CD4-positive, alpha-beta memory T cell (primary cell): ENCODE measurements at regions of chr19 and their contacts with region 1.

Region 1: GRCh38 chr19:15379083-15379995 is at the start of gene AKAP8:
- DNase-seq: peak; percentile 98 to 99 (median 98)
- H3K4me3 ChIP-seq: peak within 1 kb of the TSS; percentile 88 to 100
- H3K4me3 Mint-ChIP-seq: peak within 1 kb of the TSS; percentile 98 to 100 (median 100)
- H3K27ac ChIP-seq: peak within 1 kb of the TSS; percentile 99
- H3K27ac Mint-ChIP-seq: peak within 1 kb of the TSS; percentile 99 to 100 (median 100)
- H3K4me1 ChIP-seq: peaks cover 38% of the 10 kb centered on the region
- H3K4me1 Mint-ChIP-seq: peaks cover 25 to 48% (median 34%) of the 10 kb centered on the region in 4 donors
- H3K27me3 ChIP-seq: no peaks in the 10 kb centered on the region
- H3K27me3 Mint-ChIP-seq: no peaks in the 10 kb centered on the region
- total RNA-seq, gene AKAP8: 69.9 to 71.5 TPM

Region 2: GRCh38 chr19:15288146-15288963 is 91.0 kb before region 1 on chr19:
- CTCF ChIA-PET with region 1: interaction called, 5 read pairs
- POLR2A ChIA-PET with region 1: interaction called, 18 read pairs
- intact Hi-C with region 1: no loop called
- DNase-seq: no peak
- H3K4me3 ChIP-seq: no peak overlapping the region
- H3K4me3 Mint-ChIP-seq: peak overlapping the region in 7 of 8 donors; percentile 68 to 81 (median 72)
- H3K27ac ChIP-seq: peak overlapping the region; percentile 14
- H3K27ac Mint-ChIP-seq: peak overlapping the region; percentile 16 to 92 (median 67)
- H3K4me1 ChIP-seq: peaks cover 96% of the 10 kb centered on the region
- H3K4me1 Mint-ChIP-seq: peaks cover 83 to 100% (median 93%) of the 10 kb centered on the region in 4 donors
- H3K27me3 ChIP-seq: no peaks in the 10 kb centered on the region
- H3K27me3 Mint-ChIP-seq: no peaks in the 10 kb centered on the region

Region 3: GRCh38 chr19:15307169-15307568 is 72.2 kb before region 1 on chr19:
- CTCF ChIA-PET with region 1: no interaction called
- POLR2A ChIA-PET with region 1: no interaction called
- intact Hi-C with region 1: no loop called
- DNase-seq: no peak
- H3K4me3 ChIP-seq: no peak overlapping the region
- H3K4me3 Mint-ChIP-seq: peak overlapping the region in 5 of 8 donors; percentile 10 to 73 (median 34)
- H3K27ac ChIP-seq: no peak overlapping the region
- H3K27ac Mint-ChIP-seq: peak overlapping the region in 3 of 7 donors; percentile 2 to 47 (median 16)
- H3K4me1 ChIP-seq: peaks cover 80% of the 10 kb centered on the region
- H3K4me1 Mint-ChIP-seq: peaks cover 55 to 95% (median 71%) of the 10 kb centered on the region in 4 donors
- H3K27me3 ChIP-seq: no peaks in the 10 kb centered on the region
- H3K27me3 Mint-ChIP-seq: no peaks in the 10 kb centered on the region

Region 4: DNA sequence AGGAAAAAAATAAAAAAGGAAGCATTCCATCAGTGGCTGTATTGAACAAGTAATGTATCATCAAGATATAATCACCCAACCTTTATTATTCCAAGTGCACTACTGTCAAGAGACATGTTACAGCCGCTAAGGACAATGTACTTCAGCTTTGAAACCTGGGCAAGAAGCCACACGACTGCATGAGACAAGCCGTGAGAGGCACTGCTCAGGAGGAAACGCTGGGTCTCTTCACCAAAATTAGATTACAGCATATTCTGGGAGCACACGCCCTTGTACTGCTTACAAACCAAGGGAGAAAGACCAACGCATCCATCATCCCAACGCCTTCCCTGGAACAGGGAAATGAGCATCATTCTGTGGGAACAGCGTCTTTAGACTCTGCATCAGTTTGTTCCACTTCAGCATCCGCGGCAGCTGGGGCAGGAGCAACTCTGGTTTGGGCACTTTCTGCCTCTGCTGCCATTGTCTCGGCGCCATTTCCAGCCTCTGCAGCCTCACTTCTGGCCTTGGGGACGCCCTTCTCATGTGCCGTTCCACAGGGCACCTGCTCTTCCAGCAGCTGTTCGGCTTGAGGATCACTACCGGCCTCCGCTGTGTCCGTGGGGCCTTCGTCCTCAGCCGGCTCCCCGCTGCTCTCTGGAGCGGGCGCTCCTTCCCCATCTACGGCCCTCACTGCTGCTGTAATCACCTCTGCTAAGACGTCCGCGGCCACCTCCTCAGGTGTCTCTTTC is 24.6 kb before region 1 on chr19:
- CTCF ChIA-PET with region 1: interaction called, 5 read pairs
- POLR2A ChIA-PET with region 1: interaction called, 16 read pairs
- intact Hi-C with region 1: no loop called
- DNase-seq: no peak
- H3K4me3 ChIP-seq: no peak overlapping the region
- H3K4me3 Mint-ChIP-seq: no peak overlapping the region
- H3K27ac ChIP-seq: no peak overlapping the region
- H3K27ac Mint-ChIP-seq: peak overlapping the region in 3 of 7 donors; percentile 18 to 78 (median 35)
- H3K4me1 ChIP-seq: no peaks in the 10 kb centered on the region
- H3K4me1 Mint-ChIP-seq: no peaks in the 10 kb centered on the region
- H3K27me3 ChIP-seq: no peaks in the 10 kb centered on the region
- H3K27me3 Mint-ChIP-seq: no peaks in the 10 kb centered on the region

Region 5: DNA sequence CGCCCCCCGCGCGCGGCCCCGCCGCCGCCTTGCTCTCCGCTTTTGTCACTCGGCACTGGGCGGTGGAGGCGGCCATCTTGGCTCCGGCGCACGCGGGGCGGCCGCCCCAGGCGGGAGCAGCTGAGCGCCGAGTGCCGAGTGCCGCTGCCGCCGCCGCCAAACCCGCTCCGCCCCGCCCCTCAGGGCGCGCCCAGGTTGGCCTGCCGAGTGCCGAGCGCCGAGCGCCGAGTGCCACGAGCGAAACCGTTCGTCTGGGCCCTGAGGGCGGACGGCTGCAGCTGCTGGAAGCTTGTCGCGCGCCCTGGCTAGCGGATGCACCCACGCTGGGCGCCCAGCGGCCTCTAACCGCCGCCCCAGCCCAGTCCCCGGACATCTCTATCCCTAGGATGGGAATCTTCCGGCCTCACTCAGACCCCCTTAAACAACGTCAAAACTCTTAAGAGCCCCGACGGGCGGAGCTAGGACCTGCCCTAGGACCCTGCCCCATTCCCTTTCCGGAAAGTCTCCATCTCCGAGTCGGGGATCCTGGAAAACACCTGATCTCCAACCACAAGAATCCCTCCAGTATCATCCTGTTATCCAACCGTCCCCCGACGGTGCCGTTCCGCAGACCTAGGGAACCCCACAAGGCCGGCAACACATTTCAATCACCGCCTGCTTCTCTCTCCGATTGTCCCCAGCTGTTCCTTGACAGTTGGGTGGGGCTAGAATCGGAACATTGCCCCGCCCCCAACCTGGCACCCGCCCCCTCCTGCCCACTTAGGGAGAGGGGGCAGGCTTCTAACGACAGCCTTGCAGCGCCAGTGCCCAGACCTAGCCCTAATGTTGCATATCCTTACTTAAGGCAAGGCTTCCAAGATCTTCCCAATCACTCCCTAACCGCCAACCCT is 53.5 kb after region 1 on chr19:
- CTCF ChIA-PET with region 1: no interaction called
- POLR2A ChIA-PET with region 1: interaction called, 25 read pairs
- intact Hi-C with region 1: no loop called
- DNase-seq: peak; percentile 91 to 92 (median 91)
- H3K4me3 ChIP-seq: peak overlapping the region; percentile 78 to 91
- H3K4me3 Mint-ChIP-seq: peak overlapping the region; percentile 87 to 95 (median 92)
- H3K27ac ChIP-seq: peak overlapping the region; percentile 61
- H3K27ac Mint-ChIP-seq: peak overlapping the region; percentile 87 to 99 (median 94)
- H3K4me1 ChIP-seq: peaks cover 31% of the 10 kb centered on the region
- H3K4me1 Mint-ChIP-seq: peaks cover 21 to 44% (median 27%) of the 10 kb centered on the region in 4 donors
- H3K27me3 ChIP-seq: no peaks in the 10 kb centered on the region
- H3K27me3 Mint-ChIP-seq: no peaks in the 10 kb centered on the region

Region 6: DNA sequence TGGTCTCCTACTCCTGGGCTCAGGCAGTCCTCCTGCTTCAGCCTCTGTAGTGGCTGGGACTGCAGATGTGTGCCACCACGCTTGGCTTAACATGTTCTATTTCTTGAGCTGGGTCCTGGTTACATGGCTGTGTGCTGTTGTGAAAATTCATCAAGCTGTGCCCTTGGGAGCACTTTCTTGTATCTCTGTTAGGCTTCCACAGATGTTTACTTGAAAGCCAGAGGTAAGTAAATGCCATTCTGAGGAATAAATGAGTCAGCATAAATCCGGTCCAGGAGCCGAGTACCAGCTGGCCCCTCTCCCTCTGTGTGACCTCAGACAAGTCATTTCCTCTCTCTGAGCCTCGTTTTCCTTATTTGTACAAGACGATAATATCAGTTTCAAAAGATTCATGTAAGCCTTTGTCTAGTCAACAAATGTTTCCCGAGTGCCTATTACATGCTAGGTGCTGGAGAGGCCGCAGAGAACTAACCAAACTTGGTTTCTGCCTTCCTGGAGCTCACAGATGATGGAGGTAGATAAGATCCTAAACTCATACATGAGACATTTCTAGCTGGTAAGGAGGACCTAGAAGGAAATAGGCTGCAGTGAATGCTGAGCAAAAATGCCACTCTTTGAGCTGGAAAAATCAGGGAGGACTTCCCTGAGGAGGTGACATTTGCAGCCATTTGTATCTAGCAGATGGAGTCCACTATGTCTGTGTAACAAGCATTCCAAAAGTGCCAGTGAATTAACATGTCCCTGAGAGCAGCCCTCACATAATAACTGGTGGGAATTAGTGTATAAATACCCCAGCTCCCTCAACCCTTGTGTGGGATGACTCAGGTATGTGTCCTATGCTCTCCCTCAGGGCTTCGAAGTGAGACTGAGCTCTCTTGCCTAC is 87.8 kb after region 1 on chr19:
- CTCF ChIA-PET with region 1: interaction called, 4 read pairs
- POLR2A ChIA-PET with region 1: interaction called, 29 read pairs
- intact Hi-C with region 1: loop called (anchors 5 kb)
- DNase-seq: peak; percentile 56 to 89 (median 65)
- H3K4me3 ChIP-seq: no peak overlapping the region
- H3K4me3 Mint-ChIP-seq: peak overlapping the region; percentile 74 to 89 (median 78)
- H3K27ac ChIP-seq: peak overlapping the region; percentile 38
- H3K27ac Mint-ChIP-seq: peak overlapping the region; percentile 83 to 97 (median 91)
- H3K4me1 ChIP-seq: peaks cover 71% of the 10 kb centered on the region
- H3K4me1 Mint-ChIP-seq: peaks cover 38 to 74% (median 55%) of the 10 kb centered on the region in 4 donors
- H3K27me3 ChIP-seq: no peaks in the 10 kb centered on the region
- H3K27me3 Mint-ChIP-seq: no peaks in the 10 kb centered on the region

Region 7: GRCh38 chr19:15836595-15837337 is 457.4 kb after region 1 on chr19:
- CTCF ChIA-PET with region 1: no interaction called
- POLR2A ChIA-PET with region 1: interaction called, 5 read pairs
- intact Hi-C with region 1: loop called (anchors 1 kb)
- DNase-seq: peak; percentile 95 to 98 (median 96)
- H3K4me3 ChIP-seq: peak overlapping the region; percentile 63 to 69
- H3K4me3 Mint-ChIP-seq: peak overlapping the region; percentile 92 to 99 (median 96)
- H3K27ac ChIP-seq: peak overlapping the region; percentile 94
- H3K27ac Mint-ChIP-seq: peak overlapping the region; percentile 89 to 100 (median 98)
- H3K4me1 ChIP-seq: peaks cover 29% of the 10 kb centered on the region
- H3K4me1 Mint-ChIP-seq: peaks cover 17 to 36% (median 26%) of the 10 kb centered on the region in 4 donors
- H3K27me3 ChIP-seq: no peaks in the 10 kb centered on the region
- H3K27me3 Mint-ChIP-seq: no peaks in the 10 kb centered on the region